OCI-LY7 (cell line): ENCODE measurements at regions of chr11 and their contacts with region 1.

Region 1: GRCh38 chr11:82932564-82932963 is 31.0 kb downstream of the DDIAS start:
- DNase-seq: no peak
- H3K4me3 ChIP-seq: no peak overlapping the region
- H3K27ac ChIP-seq: peak overlapping the region; percentile 91
- H3K4me1 ChIP-seq: peaks cover 53% of the 10 kb centered on the region
- CTCF ChIP-seq: no peak

Region 2: DNA sequence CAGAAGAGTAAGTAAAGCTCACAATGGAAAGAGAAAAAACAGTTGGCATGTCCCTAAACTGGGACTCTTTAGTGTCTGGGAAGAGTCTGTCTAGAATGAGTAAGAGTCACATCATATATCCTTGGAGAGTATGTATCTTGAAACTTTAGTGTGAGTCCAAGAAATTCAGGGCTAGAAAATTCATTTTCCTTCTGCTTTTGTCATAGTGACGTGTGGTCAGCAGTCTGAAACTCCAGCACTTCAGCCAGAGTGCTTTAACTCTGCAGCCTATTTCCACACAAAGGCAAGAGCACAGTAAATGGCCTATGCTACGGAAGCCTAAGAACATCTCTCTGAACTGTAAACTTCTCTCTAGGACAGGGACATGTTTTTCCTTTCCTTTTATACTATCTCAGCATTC is 373.0 kb before region 1 on chr11:
- CTCF ChIA-PET with region 1: no interaction called
- POLR2A ChIA-PET with region 1: no interaction called
- intact Hi-C with region 1: no loop called
- DNase-seq: no peak
- H3K4me3 ChIP-seq: no peak overlapping the region
- H3K27ac ChIP-seq: no peak overlapping the region
- H3K4me1 ChIP-seq: peaks cover 18% of the 10 kb centered on the region
- CTCF ChIP-seq: no peak

Region 3: GRCh38 chr11:82703794-82704193 is 228.8 kb before region 1 on chr11:
- CTCF ChIA-PET with region 1: no interaction called
- POLR2A ChIA-PET with region 1: no interaction called
- intact Hi-C with region 1: no loop called
- DNase-seq: no peak
- H3K4me3 ChIP-seq: no peak overlapping the region
- H3K27ac ChIP-seq: no peak overlapping the region
- H3K4me1 ChIP-seq: no peaks in the 10 kb centered on the region
- CTCF ChIP-seq: no peak

Region 4: DNA sequence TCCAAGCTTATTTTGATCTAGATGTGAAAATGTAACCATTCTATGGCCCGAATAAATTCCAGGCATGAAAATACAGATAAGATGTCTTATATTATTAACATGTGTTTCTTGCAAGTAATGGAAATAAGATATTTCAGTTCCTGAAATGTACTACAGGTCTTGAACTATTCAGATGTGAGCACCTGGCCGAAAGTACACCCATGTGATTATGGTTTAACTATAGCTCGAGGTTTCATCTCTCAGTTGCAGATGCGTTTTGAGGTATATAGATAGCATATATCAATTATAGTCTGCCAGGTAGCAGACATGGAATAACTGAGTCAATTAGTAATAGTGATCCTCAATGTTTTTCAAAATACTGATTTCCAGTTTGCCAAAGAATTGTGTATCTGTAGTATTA is 37.2 kb after region 1 on chr11:
- CTCF ChIA-PET with region 1: interaction called, 3 read pairs
- POLR2A ChIA-PET with region 1: interaction called, 18 read pairs
- intact Hi-C with region 1: loop called (anchors 1 kb)
- DNase-seq: peak; percentile 94
- H3K4me3 ChIP-seq: peak overlapping the region; percentile 33
- H3K27ac ChIP-seq: peak overlapping the region; percentile 98
- H3K4me1 ChIP-seq: peaks cover 88% of the 10 kb centered on the region
- CTCF ChIP-seq: no peak